ENCODE measurements at regions of chr22 and their contacts with region 1.

Region 1: DNA sequence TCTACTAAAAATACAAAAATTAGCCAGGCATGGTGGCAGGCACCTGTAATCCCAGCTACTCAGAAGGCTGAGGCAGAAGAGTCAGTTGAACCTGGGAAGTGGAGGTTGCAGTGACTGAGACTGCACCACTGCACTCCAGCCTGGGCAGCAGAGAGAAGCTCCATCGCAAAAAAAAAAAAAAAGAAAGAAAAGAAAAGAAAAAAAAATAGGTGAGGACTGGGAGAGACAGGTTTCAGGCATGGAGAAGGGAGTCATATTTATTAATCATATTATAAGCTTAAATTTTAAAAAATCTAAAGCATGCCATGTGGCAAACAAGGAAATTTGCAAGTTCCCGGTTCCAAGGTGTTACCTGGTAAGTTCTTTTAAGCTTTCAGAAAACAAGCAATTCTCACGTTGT is at the start of gene APOL5:
- DNase-seq: no peak
- H3K4me3 ChIP-seq: no peak within 1 kb of the TSS
- H3K27ac ChIP-seq: no peak within 1 kb of the TSS
- H3K4me1 ChIP-seq: no peaks in the 10 kb centered on the region
- H3K27me3 ChIP-seq: no peaks in the 10 kb centered on the region
- CTCF ChIP-seq: no peak
- total RNA-seq, gene APOL5: not detected in 2 replicates

Region 2: GRCh38 chr22:35821654-35822053 is 104.1 kb after region 1 on chr22:
- CTCF ChIA-PET with region 1: no interaction called
- POLR2A ChIA-PET with region 1: no interaction called
- intact Hi-C with region 1: no loop called
- DNase-seq: no peak
- H3K4me3 ChIP-seq: no peak overlapping the region
- H3K27ac ChIP-seq: no peak overlapping the region
- H3K4me1 ChIP-seq: no peaks in the 10 kb centered on the region
- H3K27me3 ChIP-seq: no peaks in the 10 kb centered on the region
- CTCF ChIP-seq: no peak

Region 3: DNA sequence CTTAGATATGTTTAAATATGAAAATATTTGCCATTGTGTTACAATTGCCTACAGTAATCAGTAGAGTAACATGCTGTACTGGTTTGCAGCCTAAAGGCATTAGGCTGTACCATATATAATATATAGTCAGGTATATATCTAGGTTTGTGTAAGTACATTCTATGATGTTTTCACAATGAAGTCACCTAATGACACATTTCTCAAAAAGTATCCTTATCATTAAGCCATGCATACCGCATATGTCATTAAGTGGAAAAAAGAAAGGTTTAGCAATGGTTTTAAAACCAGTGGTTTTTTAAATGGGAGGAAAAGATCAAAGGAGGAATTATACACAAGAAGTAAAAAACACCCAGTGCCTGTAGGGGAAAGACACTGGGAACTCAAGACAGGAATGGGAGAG is 188.3 kb after region 1 on chr22:
- CTCF ChIA-PET with region 1: no interaction called
- POLR2A ChIA-PET with region 1: interaction called, 12 read pairs
- intact Hi-C with region 1: no loop called
- DNase-seq: peak in 1 of 2 experiments; percentile 63
- H3K4me3 ChIP-seq: no peak overlapping the region
- H3K27ac ChIP-seq: no peak overlapping the region
- H3K4me1 ChIP-seq: peaks cover 65% of the 10 kb centered on the region
- H3K27me3 ChIP-seq: no peaks in the 10 kb centered on the region
- CTCF ChIP-seq: no peak

Region 4: DNA sequence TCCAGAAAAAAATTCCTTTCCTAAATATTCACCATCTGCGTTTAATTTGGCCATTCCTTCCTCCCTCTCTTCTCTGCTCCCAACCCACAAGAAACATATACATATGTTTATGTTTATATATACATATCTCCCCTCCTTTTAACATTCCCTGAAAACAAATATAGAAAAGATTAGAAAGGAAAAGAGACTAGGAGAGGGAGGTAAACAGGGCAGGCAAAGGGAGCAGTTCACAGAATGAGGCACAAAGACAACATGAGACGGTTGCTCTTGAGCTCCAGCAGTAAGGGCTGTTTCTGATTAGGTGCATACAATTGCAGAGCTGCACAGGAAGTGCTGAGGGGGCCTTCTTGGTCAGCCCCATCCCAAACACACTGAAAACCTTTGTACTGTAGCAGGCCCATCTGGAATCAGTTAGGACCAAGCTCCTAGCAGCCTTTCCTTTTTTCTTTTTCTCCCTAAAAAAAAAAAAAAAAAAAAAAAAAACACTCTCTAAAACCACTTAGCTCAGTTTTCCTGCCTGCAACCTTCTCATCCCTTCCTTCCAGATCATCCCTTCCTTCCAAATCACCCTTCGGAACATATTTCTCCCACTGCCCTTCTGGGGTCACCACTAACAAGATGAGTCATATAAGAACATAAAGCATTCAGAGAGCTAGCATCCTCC is 254.0 kb after region 1 on chr22:
- CTCF ChIA-PET with region 1: no interaction called
- POLR2A ChIA-PET with region 1: no interaction called
- intact Hi-C with region 1: no loop called
- DNase-seq: no peak
- H3K4me3 ChIP-seq: no peak overlapping the region
- H3K27ac ChIP-seq: no peak overlapping the region
- H3K4me1 ChIP-seq: peaks cover 16% of the 10 kb centered on the region
- H3K27me3 ChIP-seq: no peaks in the 10 kb centered on the region
- CTCF ChIP-seq: no peak

Region 5: GRCh38 chr22:36470162-36470993 is 752.8 kb after region 1 on chr22:
- CTCF ChIA-PET with region 1: no interaction called
- POLR2A ChIA-PET with region 1: no interaction called
- intact Hi-C with region 1: no loop called
- DNase-seq: peak; percentile 77 to 86
- H3K4me3 ChIP-seq: no peak overlapping the region
- H3K27ac ChIP-seq: no peak overlapping the region
- H3K4me1 ChIP-seq: peaks cover 66% of the 10 kb centered on the region
- H3K27me3 ChIP-seq: no peaks in the 10 kb centered on the region
- CTCF ChIP-seq: peak; percentile 99

Measured in PC-9 (cell line).